GM12878 (cell line): ENCODE measurements at regions of chr6 and their contacts with region 1.

Region 1: DNA sequence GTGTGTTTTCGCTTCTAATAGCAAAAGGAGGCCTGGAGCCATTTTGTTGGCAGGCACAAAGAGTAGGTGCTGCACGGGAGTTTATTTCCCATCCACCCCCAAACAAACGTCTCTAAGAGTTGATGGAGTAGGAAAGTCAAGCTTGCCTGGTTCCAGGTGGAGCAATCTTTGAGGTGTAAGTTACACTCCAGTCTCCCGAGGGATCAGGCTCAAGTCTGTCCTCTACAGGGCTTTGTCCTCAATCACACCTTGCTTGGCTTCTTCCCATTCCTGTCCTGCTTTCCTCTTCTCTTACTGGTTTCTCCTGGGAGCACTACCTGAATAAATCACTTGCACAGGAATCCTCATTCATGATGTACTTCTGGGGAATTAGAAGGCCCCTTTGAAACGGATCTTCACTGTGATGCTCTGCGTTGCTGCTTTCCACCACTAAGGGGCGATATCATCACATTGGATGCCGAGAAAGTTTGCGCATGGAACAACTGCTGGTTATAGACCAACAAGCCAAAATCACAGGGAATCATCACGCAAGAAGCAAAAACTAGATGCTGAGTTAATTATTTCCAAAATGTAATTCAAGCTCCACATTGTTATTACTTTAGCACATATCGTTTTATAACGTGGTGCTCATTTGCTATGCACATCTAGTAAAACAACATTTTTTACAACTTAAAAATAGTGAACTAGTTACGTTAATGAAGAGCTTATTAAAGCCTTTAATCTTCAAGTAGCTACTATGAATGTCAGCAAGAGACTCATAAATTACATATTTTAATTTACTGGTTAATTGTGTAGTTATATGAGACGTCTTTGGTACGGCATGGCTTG is 156.8 kb downstream of the DNAH8 start:
- DNase-seq: no peak
- ATAC-seq: peak; percentile 66
- H3K4me3 ChIP-seq: no peak overlapping the region
- H3K27ac ChIP-seq: no peak overlapping the region
- H3K4me1 ChIP-seq: no peaks in the 10 kb centered on the region
- H3K27me3 ChIP-seq: no peaks in the 10 kb centered on the region
- CTCF ChIP-seq: peak; percentile 76 to 92 (median 90)
- EP300 ChIP-seq: no peak
- POLR2A ChIP-seq: no peak
- RAD21 ChIP-seq: peak; percentile 85

Region 2: DNA sequence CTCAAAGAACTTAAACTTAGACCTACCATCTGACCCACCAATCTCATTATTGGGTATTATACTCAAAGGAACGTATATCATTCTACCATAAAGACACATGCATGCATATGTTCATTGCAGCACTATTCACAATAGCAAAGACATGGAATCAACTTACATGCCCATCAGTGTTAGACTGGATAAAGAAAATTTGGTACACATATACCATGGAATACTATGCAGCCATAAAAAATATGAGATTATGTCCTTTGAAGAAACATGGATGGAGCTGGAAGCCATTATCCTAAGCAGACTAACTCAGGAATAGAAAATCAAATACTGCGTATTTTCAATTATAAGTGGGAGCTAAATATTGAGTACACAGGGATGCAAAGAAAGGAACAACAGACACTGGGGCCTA is 10.2 kb after region 1 on chr6:
- CTCF ChIA-PET with region 1: interaction called, 26 read pairs
- POLR2A ChIA-PET with region 1: no interaction called
- RAD21 ChIA-PET with region 1: interaction called, 4 read pairs
- SMC1A ChIA-PET with region 1: no interaction called
- in situ Hi-C with region 1: no loop called
- intact Hi-C with region 1: no loop called
- DNase-seq: no peak
- ATAC-seq: no peak
- H3K4me3 ChIP-seq: no peak overlapping the region
- H3K27ac ChIP-seq: no peak overlapping the region
- H3K4me1 ChIP-seq: no peaks in the 10 kb centered on the region
- H3K27me3 ChIP-seq: no peaks in the 10 kb centered on the region; a peak in 2 of 4 replicates
- CTCF ChIP-seq: no peak
- EP300 ChIP-seq: no peak
- POLR2A ChIP-seq: no peak
- RAD21 ChIP-seq: no peak

Region 3: DNA sequence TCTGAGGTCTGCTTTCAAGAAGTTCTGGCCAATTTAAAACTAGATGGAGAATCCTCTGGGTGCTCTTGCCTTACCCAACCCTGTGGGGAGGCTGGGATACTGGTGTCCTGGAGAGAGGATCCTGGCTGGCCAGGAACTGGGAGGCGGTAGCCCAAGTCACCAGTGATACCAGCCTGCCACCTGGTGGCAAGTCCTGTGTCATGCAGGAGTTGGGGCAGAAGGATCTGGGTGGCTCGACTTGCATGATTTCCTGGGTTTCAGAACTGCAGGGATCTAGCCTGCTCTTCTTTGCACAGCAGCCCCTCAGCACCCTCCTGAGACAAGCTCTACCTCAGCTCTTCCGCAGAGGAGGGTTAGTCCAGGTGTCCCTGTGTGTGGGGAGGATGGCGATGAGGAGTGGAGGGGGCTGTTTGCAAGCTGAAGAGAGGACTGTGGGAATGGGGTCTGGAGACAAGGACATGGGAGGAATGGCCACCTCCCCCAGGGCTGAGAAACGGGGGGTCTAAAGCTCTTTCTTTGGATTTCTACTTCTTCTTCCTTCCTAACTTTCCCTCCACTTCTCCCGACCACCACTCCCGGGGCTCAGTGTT is 438.1 kb after region 1 on chr6:
- CTCF ChIA-PET with region 1: interaction called, 19 read pairs
- POLR2A ChIA-PET with region 1: no interaction called
- RAD21 ChIA-PET with region 1: interaction called, 4 read pairs
- SMC1A ChIA-PET with region 1: interaction called, 3 read pairs
- in situ Hi-C with region 1: no loop called
- intact Hi-C with region 1: no loop called
- DNase-seq: no peak
- ATAC-seq: peak; percentile 88
- H3K4me3 ChIP-seq: no peak overlapping the region
- H3K27ac ChIP-seq: no peak overlapping the region
- H3K4me1 ChIP-seq: no peaks in the 10 kb centered on the region
- H3K27me3 ChIP-seq: peaks cover 9 to 14% of the 10 kb centered on the region in 2 experiments
- CTCF ChIP-seq: peak; percentile 89 to 92 (median 91)
- EP300 ChIP-seq: no peak
- POLR2A ChIP-seq: no peak
- RAD21 ChIP-seq: peak; percentile 87